AG04449 (cell line): ENCODE measurements at regions of chr1 and their contacts with region 1.

Region 1: GRCh38 chr1:3618881-3619671 is 5.7 kb upstream of the TPRG1L start:
- DNase-seq: peak; percentile 14
- H3K4me3 ChIP-seq: no peak overlapping the region
- CTCF ChIP-seq: peak; percentile 77

Region 2: GRCh38 chr1:3471302-3472087 is 147.6 kb before region 1 on chr1:
- CTCF ChIA-PET with region 1: interaction called, 25 read pairs
- POLR2A ChIA-PET with region 1: no interaction called
- DNase-seq: no peak
- H3K4me3 ChIP-seq: no peak overlapping the region
- CTCF ChIP-seq: peak; percentile 69

Region 3: GRCh38 chr1:3518256-3518655 is 100.8 kb before region 1 on chr1:
- CTCF ChIA-PET with region 1: interaction called, 33 read pairs
- POLR2A ChIA-PET with region 1: interaction called, 3 read pairs
- DNase-seq: no peak
- H3K4me3 ChIP-seq: no peak overlapping the region
- CTCF ChIP-seq: peak; percentile 54

Region 4: GRCh38 chr1:3543076-3544039 is 75.7 kb before region 1 on chr1:
- CTCF ChIA-PET with region 1: interaction called, 13 read pairs
- POLR2A ChIA-PET with region 1: no interaction called
- DNase-seq: peak; percentile 78
- H3K4me3 ChIP-seq: no peak overlapping the region
- CTCF ChIP-seq: no peak

Region 5: GRCh38 chr1:3586932-3587678 is 32.0 kb before region 1 on chr1:
- CTCF ChIA-PET with region 1: interaction called, 27 read pairs
- POLR2A ChIA-PET with region 1: no interaction called
- DNase-seq: no peak
- H3K4me3 ChIP-seq: no peak overlapping the region
- CTCF ChIP-seq: no peak